ENCODE measurements at regions of chr17 and their contacts with region 1.

Region 1: DNA sequence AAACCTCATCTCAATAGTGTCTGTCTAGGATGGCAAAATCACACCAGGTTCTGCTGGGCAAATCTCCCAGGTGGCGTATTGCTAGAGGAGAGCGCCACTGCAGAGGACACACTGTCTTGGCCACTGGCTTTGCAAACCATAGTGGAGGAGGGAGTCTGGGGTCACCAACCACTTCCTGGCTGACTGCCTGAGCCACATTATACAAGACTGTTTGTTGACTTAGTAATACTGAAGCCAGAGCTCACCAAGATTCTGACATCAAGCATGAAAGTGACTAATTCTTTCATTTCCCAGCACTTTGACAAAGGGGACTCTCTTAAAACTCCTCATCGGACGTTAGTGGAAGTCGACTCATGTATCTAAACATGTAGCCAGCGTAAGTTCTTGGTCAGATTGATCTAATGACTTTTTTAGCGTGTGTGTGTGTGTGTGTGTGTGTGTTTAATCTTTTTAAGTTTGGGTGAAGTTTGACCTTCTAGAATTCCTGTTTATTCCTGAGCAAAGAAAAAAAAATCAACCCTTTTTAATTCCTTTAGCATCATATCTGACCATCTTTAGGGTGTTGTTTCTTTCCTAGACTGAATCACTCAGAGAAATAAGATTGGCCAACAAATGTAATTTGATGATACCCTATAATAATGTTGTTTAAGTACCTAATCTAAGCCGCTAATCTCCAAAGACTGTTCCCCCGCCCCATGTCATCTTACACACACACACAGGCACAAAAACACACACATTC is 13.7 kb downstream of the PITPNC1 start:
- DNase-seq: no peak
- H3K4me3 ChIP-seq: no peak overlapping the region
- H3K27ac ChIP-seq: peak overlapping the region in 1 of 2 experiments; percentile 93; a peak in 3 of 4 replicates
- H3K4me1 ChIP-seq: peaks cover 11 to 12% of the 10 kb centered on the region in 2 experiments
- H3K27me3 ChIP-seq: no peaks in the 10 kb centered on the region
- CTCF ChIP-seq: no peak; the same call in 1 of the 2 replicates
- EP300 ChIP-seq: peak in 1 of 2 experiments; percentile 67; a peak in 1 of 4 replicates
- RAD21 ChIP-seq: no peak

Region 2: DNA sequence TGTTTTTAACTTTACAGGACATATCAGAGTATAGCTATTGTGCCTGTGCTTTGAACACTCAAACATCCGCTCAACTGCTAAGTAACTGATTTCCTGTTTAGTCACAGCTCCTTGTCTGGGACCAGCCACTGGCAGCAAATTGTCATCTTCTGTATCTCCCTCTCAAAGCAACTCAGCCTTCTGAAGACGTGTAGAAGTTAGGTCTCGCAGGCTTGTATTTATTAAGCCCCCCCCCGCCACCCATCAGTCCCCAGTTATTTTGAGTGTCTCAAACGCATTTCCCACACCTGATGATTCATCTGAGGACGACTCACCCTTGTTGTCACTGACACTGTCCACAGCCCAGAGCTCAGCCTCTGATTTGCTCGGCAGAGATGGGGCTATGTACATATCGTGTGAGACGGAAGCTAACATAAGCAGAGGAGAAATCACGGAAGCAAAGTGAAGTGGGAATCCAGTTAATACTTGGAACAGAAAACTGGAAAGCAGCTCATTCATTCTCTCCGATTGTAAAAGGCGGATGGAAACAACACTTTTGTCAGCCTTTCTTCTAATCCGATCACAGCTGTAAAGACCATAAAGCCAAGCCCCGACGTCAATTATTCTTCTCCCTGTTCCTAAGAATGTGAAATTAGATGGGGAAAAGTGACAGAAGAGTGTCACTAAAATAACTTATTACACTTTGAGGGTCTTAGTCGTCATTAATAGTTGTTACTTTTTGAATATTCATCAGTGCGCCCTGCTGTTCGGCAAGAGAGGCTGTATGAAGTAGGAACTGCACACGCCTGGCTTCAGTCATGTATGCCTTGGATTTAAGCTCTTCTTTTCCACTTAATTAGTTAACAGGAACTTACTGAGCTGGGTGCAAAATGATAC is 50.5 kb after region 1 on chr17:
- CTCF ChIA-PET with region 1: interaction called, 26 read pairs
- POLR2A ChIA-PET with region 1: no interaction called
- DNase-seq: no peak
- H3K4me3 ChIP-seq: peak overlapping the region in 1 of 2 experiments; percentile 39; a peak in 2 of 4 replicates
- H3K27ac ChIP-seq: peak overlapping the region; percentile 60 to 86
- H3K4me1 ChIP-seq: peaks cover 36 to 55% of the 10 kb centered on the region in 2 experiments
- H3K27me3 ChIP-seq: no peaks in the 10 kb centered on the region
- CTCF ChIP-seq: no peak
- EP300 ChIP-seq: 0 out of 4 replicates have a peak, but pooled peaks of 1 of the 2 experiments have one; percentile 43
- RAD21 ChIP-seq: no peak

Region 3: DNA sequence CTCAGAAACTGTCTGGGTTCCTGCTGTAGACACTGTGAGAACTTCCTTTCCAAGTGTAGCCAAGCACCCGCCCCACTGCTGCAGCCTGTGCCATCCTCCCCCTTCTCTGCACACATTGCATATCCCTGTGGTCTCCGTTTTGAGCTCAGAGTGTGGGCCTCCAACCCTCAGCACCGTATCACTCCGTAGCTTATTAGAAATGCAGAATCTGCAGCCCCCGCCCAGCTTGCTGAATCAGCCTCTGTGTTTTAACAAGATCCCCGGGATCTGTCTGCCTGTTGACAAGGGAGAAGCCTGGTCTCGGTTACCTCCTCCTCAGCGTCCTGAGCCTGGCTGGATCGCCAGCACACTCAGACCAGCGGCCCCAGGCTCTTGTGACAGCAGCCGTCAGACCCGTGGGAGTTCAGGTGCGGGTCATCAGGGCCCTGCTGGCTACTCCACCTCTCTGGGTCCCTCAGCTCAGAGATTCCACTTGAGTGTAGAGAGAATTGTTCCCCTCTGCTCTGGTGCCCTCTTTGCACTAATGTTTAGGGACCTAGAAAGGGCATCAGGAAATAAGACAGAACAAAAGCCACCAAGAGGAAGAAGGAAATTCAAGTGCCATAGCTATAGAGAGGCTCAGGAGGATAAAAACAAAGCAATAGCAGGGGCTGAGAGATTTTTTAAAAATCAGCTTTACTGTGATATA is 78.5 kb after region 1 on chr17:
- CTCF ChIA-PET with region 1: interaction called, 234 read pairs
- POLR2A ChIA-PET with region 1: no interaction called
- DNase-seq: peak; percentile 84
- H3K4me3 ChIP-seq: no peak overlapping the region
- H3K27ac ChIP-seq: peak overlapping the region in 1 of 2 experiments; percentile 73; a peak in 2 of 4 replicates
- H3K4me1 ChIP-seq: peaks cover 3 to 28% of the 10 kb centered on the region in 2 experiments; a peak in 3 of 4 replicates
- H3K27me3 ChIP-seq: no peaks in the 10 kb centered on the region
- CTCF ChIP-seq: no peak
- EP300 ChIP-seq: peak in 1 of 2 experiments; percentile 46; a peak in 1 of 4 replicates
- RAD21 ChIP-seq: no peak

Region 4: GRCh38 chr17:67574658-67575293 is 184.0 kb after region 1 on chr17:
- CTCF ChIA-PET with region 1: no interaction called
- POLR2A ChIA-PET with region 1: no interaction called
- DNase-seq: no peak
- H3K4me3 ChIP-seq: no peak overlapping the region
- H3K27ac ChIP-seq: no peak overlapping the region
- H3K4me1 ChIP-seq: peaks cover 0 to 13% of the 10 kb centered on the region in 2 experiments; a peak in 1 of 4 replicates
- H3K27me3 ChIP-seq: no peaks in the 10 kb centered on the region
- CTCF ChIP-seq: no peak
- EP300 ChIP-seq: no peak
- RAD21 ChIP-seq: no peak

Region 5: DNA sequence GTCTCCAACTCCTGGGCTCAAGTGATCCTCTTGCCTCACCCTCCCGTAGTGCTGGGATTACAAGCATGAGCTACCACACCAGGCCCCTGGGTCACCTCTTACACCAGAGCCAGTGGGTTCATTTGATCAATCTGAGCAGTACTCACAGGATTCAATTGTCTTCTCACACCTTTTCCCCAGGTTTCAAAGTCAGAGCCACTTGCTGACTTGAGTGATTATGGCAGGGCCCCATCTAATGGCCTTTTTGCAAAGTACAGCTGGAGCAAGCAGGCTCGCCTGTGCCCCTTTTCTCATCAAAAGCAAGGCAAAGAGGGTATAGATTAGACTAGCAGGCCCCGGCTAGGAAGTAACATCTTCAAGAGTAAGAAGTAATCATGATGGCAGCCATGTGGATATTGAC is 212.1 kb after region 1 on chr17:
- CTCF ChIA-PET with region 1: interaction called, 75 read pairs
- POLR2A ChIA-PET with region 1: interaction called, 4 read pairs
- DNase-seq: peak; percentile 42
- H3K4me3 ChIP-seq: no peak overlapping the region
- H3K27ac ChIP-seq: no peak overlapping the region
- H3K4me1 ChIP-seq: peaks cover 24 to 33% of the 10 kb centered on the region in 2 experiments
- H3K27me3 ChIP-seq: no peaks in the 10 kb centered on the region
- CTCF ChIP-seq: peak; percentile 57
- EP300 ChIP-seq: no peak
- RAD21 ChIP-seq: peak; percentile 85

Region 6: GRCh38 chr17:67689534-67690177 is 298.8 kb after region 1 on chr17:
- CTCF ChIA-PET with region 1: interaction called, 11 read pairs
- POLR2A ChIA-PET with region 1: no interaction called
- DNase-seq: peak; percentile 77
- H3K4me3 ChIP-seq: no peak overlapping the region
- H3K27ac ChIP-seq: peak overlapping the region in 1 of 2 experiments; percentile 2; a peak in 1 of 4 replicates
- H3K4me1 ChIP-seq: no peaks in the 10 kb centered on the region
- H3K27me3 ChIP-seq: no peaks in the 10 kb centered on the region
- CTCF ChIP-seq: peak; percentile 99
- EP300 ChIP-seq: no peak
- RAD21 ChIP-seq: peak; percentile 93